WTC11 (cell line): ENCODE measurements at regions of chr3 and their contacts with region 1.

Region 1: GRCh38 chr3:42749753-42750231 is 23.3 kb downstream of the CCDC13 start:
- DNase-seq: peak; percentile 42
- ATAC-seq: peak; percentile 87
- H3K4me3 Mint-ChIP-seq: no peak overlapping the region
- H3K27ac Mint-ChIP-seq: peak overlapping the region; percentile 65; the same call in 1 of the 2 replicates
- H3K4me1 Mint-ChIP-seq: peaks cover 22% of the 10 kb centered on the region
- H3K27me3 Mint-ChIP-seq: no peaks in the 10 kb centered on the region; the same call in 1 of the 2 replicates
- CTCF ChIP-seq: peak; percentile 48; the same call in 1 of the 2 replicates

Region 2: GRCh38 chr3:42590989-42591756 is 158.6 kb before region 1 on chr3:
- CTCF ChIA-PET with region 1: interaction called, 11 read pairs
- POLR2A ChIA-PET with region 1: no interaction called
- DNase-seq: peak; percentile 31
- ATAC-seq: no peak
- H3K4me3 Mint-ChIP-seq: peak overlapping the region; percentile 94
- H3K27ac Mint-ChIP-seq: peak overlapping the region; percentile 93
- H3K4me1 Mint-ChIP-seq: peaks cover 43% of the 10 kb centered on the region
- H3K27me3 Mint-ChIP-seq: no peaks in the 10 kb centered on the region
- CTCF ChIP-seq: no peak

Region 3: DNA sequence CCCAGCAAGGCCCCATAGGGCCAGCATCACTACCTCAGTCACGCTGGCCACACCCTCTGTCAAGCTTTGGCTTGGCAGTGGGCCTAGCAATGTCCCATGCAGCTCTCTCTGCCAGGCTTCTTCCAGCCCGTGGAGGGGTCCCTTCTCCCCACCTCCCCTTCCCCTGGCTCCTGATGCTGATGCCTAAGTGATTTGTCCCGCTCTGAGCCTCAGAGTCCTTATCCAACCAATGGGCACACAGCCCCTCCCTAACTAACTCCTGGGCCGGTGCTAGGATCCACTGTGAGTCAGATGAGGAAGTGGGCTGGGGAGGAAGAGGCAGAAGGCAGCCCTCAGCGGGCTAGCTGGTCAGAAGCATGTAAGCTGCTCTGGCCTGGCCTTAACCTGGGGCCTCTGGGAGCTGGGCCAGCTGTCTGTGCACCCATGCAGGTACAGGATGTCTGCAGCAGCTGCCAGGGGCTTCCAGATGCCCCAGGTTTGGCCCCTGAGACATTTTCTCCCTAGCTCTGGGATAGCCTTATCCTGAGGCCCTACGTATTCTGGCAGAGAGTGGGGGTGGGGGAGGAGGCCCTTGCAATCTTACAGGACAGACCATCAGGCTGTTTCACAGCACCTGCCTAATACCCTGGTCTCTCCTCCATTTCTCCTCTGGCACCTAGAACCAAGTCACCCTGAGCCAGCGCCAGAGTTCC is 97.0 kb before region 1 on chr3:
- CTCF ChIA-PET with region 1: interaction called, 32 read pairs
- POLR2A ChIA-PET with region 1: interaction called, 4 read pairs
- DNase-seq: no peak
- ATAC-seq: peak; percentile 2
- H3K4me3 Mint-ChIP-seq: peak overlapping the region; percentile 87
- H3K27ac Mint-ChIP-seq: 0 out of 2 replicates have a peak overlapping the region, but pooled peaks have one; percentile 12
- H3K4me1 Mint-ChIP-seq: peaks cover 47% of the 10 kb centered on the region
- H3K27me3 Mint-ChIP-seq: no peaks in the 10 kb centered on the region
- CTCF ChIP-seq: no peak

Region 4: DNA sequence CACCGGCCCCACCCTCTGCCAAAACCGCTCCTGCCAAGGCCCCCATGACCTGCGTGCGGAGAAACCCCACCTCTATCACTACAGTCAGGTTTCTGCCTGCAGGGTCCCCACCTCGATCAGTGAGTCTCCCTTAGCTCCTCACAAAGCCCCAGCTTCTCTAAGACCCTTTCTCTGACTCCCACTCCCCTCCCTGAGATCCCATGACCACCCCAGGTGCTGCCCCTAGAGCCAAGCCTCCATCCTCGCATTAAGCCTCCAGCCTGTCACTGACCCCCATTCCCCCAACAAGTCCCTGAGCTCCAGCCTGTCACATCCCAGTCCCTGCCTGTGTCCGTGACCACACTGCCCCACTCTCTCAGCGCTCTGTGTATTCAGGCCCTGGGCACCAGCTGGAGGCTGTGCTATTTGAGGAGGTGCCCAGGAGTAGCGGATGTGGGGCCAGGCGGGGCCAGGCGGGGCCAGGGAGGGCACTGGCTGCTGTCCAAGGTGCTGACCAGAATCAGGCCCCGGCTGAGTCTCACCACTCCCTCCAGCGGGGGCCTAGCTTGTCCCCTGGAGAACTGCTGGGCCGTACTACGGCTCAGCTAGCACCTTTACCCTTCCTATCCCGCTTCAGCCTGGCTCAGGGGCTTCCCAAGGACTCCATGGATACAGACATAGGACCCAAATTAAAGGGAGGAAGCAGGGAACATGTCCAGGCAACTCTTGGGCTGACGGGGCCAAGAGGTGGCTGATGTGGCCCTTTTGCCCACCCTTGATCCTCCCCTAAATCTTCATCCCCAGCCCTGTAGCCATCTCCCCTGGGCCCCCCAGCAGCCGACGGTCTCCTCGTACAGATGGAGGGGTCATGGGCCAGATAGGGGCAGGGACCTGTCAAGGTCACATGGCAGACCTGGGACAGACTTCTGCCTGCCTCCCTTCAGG is 48.4 kb before region 1 on chr3:
- CTCF ChIA-PET with region 1: interaction called, 13 read pairs
- POLR2A ChIA-PET with region 1: no interaction called
- DNase-seq: peak; percentile 82
- ATAC-seq: peak; percentile 93
- H3K4me3 Mint-ChIP-seq: no peak overlapping the region
- H3K27ac Mint-ChIP-seq: no peak overlapping the region
- H3K4me1 Mint-ChIP-seq: peaks cover 8% of the 10 kb centered on the region
- H3K27me3 Mint-ChIP-seq: no peaks in the 10 kb centered on the region
- CTCF ChIP-seq: no peak

Region 5: GRCh38 chr3:42739401-42740158 is 10.2 kb before region 1 on chr3:
- CTCF ChIA-PET with region 1: interaction called, 49 read pairs
- POLR2A ChIA-PET with region 1: no interaction called
- DNase-seq: no peak
- ATAC-seq: 0 out of 2 replicates have a peak, but pooled peaks have one; percentile 9
- H3K4me3 Mint-ChIP-seq: no peak overlapping the region
- H3K27ac Mint-ChIP-seq: no peak overlapping the region
- H3K4me1 Mint-ChIP-seq: peaks cover 23% of the 10 kb centered on the region
- H3K27me3 Mint-ChIP-seq: peaks cover 6% of the 10 kb centered on the region; the same call in 1 of the 2 replicates
- CTCF ChIP-seq: no peak

Region 6: GRCh38 chr3:42831321-42831713 is 81.5 kb after region 1 on chr3:
- CTCF ChIA-PET with region 1: interaction called, 26 read pairs
- POLR2A ChIA-PET with region 1: interaction called, 3 read pairs
- DNase-seq: peak; percentile 88
- ATAC-seq: peak; percentile 88
- H3K4me3 Mint-ChIP-seq: no peak overlapping the region
- H3K27ac Mint-ChIP-seq: no peak overlapping the region
- H3K4me1 Mint-ChIP-seq: peaks cover 12% of the 10 kb centered on the region
- H3K27me3 Mint-ChIP-seq: no peaks in the 10 kb centered on the region
- CTCF ChIP-seq: peak; percentile 73

Region 7: DNA sequence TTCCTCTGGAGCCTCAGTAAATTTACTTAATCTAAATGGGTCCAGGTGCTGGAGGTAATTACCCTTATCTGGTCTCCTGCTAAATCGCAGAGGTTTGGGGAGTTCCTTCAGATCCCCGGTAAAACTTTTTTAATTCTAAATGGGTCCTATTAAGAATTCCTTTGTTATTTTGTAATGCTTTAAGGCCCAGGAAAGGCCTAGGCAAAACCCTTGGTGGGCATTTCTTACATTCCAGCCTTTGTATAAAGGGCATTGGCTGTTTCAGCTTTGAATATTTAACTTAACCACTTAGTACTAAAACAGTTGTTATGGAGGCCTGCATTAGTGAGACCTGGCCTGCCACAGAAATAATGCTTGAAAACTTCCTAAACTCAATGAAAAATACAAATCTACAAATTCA is 141.2 kb after region 1 on chr3:
- CTCF ChIA-PET with region 1: no interaction called
- POLR2A ChIA-PET with region 1: no interaction called
- DNase-seq: no peak
- ATAC-seq: peak; percentile 93
- H3K4me3 Mint-ChIP-seq: no peak overlapping the region
- H3K27ac Mint-ChIP-seq: peak overlapping the region; percentile 98
- H3K4me1 Mint-ChIP-seq: peaks cover 57% of the 10 kb centered on the region
- H3K27me3 Mint-ChIP-seq: no peaks in the 10 kb centered on the region
- CTCF ChIP-seq: no peak